ENCODE measurements at regions of chr16 and their contacts with region 1.

Region 1: GRCh38 chr16:1533443-1533951 is at the start of gene TMEM204:
- DNase-seq: peak in 8 of 9 experiments; percentile 34 to 83 (median 53)
- ATAC-seq: peak; percentile 35
- H3K4me3 ChIP-seq: peak within 1 kb of the TSS; percentile 78 to 95
- H3K4me3 Mint-ChIP-seq: peak within 1 kb of the TSS; percentile 88
- H3K27ac ChIP-seq: peak within 1 kb of the TSS; percentile 69 to 75
- H3K27ac Mint-ChIP-seq: peak within 1 kb of the TSS; percentile 83
- H3K4me1 ChIP-seq: peaks cover 50% of the 10 kb centered on the region
- H3K4me1 Mint-ChIP-seq: peaks cover 51% of the 10 kb centered on the region
- H3K27me3 ChIP-seq: no peaks in the 10 kb centered on the region
- H3K27me3 Mint-ChIP-seq: no peaks in the 10 kb centered on the region
- CTCF ChIP-seq: no peak
- total RNA-seq, gene TMEM204: 6.8 to 7.3 TPM

Region 2: GRCh38 chr16:1244881-1245280 is 288.6 kb before region 1 on chr16:
- CTCF ChIA-PET with region 1: no interaction called
- POLR2A ChIA-PET with region 1: no interaction called
- intact Hi-C with region 1: no loop called
- DNase-seq: peak in 4 of 9 experiments; percentile 14 to 44 (median 28)
- ATAC-seq: no peak
- H3K4me3 ChIP-seq: no peak overlapping the region
- H3K4me3 Mint-ChIP-seq: no peak overlapping the region
- H3K27ac ChIP-seq: no peak overlapping the region
- H3K27ac Mint-ChIP-seq: no peak overlapping the region
- H3K4me1 ChIP-seq: peaks cover 6% of the 10 kb centered on the region
- H3K4me1 Mint-ChIP-seq: no peaks in the 10 kb centered on the region
- H3K27me3 ChIP-seq: no peaks in the 10 kb centered on the region
- H3K27me3 Mint-ChIP-seq: peaks cover 12% of the 10 kb centered on the region
- CTCF ChIP-seq: no peak

Region 3: DNA sequence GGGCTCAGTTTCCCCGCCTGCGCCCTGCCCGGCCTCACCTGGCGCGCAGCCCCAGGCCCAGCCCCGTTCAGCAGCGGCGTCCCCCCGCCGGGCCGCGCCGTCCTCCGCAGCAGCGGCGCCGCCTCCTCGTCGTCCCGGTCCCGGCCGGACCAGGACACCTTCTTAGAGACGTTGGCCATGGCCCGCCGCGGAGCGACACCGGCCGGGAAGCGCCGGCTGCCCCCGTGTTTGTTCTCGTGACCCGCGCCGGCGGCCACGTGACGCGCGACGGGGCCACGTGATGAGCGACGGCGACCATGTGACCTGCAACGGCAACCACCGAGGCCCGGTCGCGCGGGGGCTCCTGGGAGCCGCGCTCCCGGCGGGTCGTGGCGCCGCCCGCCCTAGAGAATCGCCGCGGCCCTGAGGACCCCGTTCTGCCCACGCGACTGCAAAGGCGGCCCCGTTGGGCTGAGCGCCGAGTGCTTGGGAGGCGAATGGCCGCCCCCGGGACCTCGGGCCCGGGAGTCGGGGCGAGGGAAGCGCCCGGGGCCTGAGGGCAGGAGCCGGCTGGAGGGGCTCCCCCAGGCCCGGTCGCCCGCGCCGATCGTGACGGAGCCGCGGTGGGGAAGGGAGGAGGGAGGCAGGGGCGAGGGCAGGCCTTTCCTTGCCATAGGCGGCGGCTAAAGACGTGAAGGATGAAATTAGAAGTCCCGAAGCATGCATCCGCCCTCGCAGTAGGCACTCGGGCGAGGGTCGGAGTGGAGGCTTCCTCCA is 58.5 kb before region 1 on chr16 and contains the start of gene CLCN7:
- CTCF ChIA-PET with region 1: no interaction called
- POLR2A ChIA-PET with region 1: no interaction called
- intact Hi-C with region 1: loop called (anchors 1 to 10 kb)
- DNase-seq: peak; percentile 58 to 93 (median 87)
- ATAC-seq: peak; percentile 82
- H3K4me3 ChIP-seq: peak within 1 kb of the TSS; percentile 60 to 84
- H3K4me3 Mint-ChIP-seq: peak within 1 kb of the TSS; percentile 83
- H3K27ac ChIP-seq: peak within 1 kb of the TSS; percentile 75 to 81
- H3K27ac Mint-ChIP-seq: peak within 1 kb of the TSS; percentile 90
- H3K4me1 ChIP-seq: peaks cover 31% of the 10 kb centered on the region
- H3K4me1 Mint-ChIP-seq: peaks cover 40% of the 10 kb centered on the region
- H3K27me3 ChIP-seq: no peaks in the 10 kb centered on the region
- H3K27me3 Mint-ChIP-seq: no peaks in the 10 kb centered on the region
- CTCF ChIP-seq: no peak
- total RNA-seq, gene CLCN7: 85.7 to 90.0 TPM

Region 4: DNA sequence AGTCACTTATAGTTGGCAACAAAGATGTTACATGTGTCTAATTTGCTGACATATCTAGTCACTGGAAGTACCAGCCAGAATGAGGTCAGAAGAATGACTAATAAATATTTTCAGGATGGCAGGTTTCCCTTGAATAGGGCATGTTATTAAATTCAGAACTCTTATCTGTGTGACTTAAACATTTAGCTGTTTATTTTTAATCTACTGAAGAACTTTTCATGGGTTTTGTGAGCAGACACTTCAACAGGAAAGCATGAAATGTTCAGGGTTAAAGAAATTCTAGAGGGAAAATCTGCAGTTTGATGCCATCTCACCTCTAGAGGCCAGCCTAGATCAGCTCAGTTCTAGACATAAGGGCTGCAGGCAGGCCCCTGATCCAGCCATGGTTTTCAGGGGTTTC is 157.8 kb after region 1 on chr16:
- CTCF ChIA-PET with region 1: no interaction called
- POLR2A ChIA-PET with region 1: no interaction called
- intact Hi-C with region 1: no loop called
- DNase-seq: no peak
- ATAC-seq: no peak
- H3K4me3 ChIP-seq: no peak overlapping the region
- H3K4me3 Mint-ChIP-seq: no peak overlapping the region
- H3K27ac ChIP-seq: no peak overlapping the region
- H3K27ac Mint-ChIP-seq: no peak overlapping the region
- H3K4me1 ChIP-seq: no peaks in the 10 kb centered on the region
- H3K4me1 Mint-ChIP-seq: peaks cover 1% of the 10 kb centered on the region
- H3K27me3 ChIP-seq: no peaks in the 10 kb centered on the region
- H3K27me3 Mint-ChIP-seq: no peaks in the 10 kb centered on the region
- CTCF ChIP-seq: no peak

Region 5: DNA sequence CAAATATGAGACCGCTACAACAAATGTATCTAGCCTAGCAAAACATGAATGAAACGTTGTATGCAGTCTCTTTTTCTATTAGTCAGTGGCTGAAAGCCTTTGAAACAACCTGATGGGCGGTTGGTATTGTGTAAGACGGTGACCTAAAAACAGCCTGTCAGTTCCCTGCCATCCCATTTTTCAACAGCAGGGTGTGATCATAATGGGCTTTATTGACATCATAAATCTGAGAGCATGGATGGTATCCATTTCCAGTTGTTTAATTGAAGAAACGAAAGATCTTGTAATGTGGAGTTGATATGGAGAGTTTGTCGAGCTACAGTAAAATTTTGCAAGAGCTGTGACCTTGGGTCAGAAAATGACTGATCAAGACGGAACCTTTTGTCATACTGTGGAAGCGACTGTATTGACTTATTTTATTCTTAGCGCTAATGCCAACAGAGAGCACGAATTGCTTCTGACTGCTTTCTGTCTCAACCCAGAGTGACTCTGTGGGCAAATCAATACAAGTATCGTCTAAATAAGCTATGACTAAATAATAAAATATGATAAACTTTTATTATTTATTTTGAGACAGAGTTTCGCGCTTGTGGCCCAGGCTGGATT is 350.8 kb after region 1 on chr16:
- CTCF ChIA-PET with region 1: no interaction called
- POLR2A ChIA-PET with region 1: no interaction called
- intact Hi-C with region 1: no loop called
- DNase-seq: peak in 1 of 9 experiments; percentile 21
- ATAC-seq: no peak
- H3K4me3 ChIP-seq: no peak overlapping the region
- H3K4me3 Mint-ChIP-seq: no peak overlapping the region
- H3K27ac ChIP-seq: no peak overlapping the region
- H3K27ac Mint-ChIP-seq: no peak overlapping the region
- H3K4me1 ChIP-seq: no peaks in the 10 kb centered on the region
- H3K4me1 Mint-ChIP-seq: no peaks in the 10 kb centered on the region
- H3K27me3 ChIP-seq: peaks cover 0 to 3% of the 10 kb centered on the region in 2 experiments
- H3K27me3 Mint-ChIP-seq: peaks cover 13% of the 10 kb centered on the region
- CTCF ChIP-seq: no peak